A549 (cell line): ENCODE measurements at regions of chr15 and their contacts with region 1.

Region 1: DNA sequence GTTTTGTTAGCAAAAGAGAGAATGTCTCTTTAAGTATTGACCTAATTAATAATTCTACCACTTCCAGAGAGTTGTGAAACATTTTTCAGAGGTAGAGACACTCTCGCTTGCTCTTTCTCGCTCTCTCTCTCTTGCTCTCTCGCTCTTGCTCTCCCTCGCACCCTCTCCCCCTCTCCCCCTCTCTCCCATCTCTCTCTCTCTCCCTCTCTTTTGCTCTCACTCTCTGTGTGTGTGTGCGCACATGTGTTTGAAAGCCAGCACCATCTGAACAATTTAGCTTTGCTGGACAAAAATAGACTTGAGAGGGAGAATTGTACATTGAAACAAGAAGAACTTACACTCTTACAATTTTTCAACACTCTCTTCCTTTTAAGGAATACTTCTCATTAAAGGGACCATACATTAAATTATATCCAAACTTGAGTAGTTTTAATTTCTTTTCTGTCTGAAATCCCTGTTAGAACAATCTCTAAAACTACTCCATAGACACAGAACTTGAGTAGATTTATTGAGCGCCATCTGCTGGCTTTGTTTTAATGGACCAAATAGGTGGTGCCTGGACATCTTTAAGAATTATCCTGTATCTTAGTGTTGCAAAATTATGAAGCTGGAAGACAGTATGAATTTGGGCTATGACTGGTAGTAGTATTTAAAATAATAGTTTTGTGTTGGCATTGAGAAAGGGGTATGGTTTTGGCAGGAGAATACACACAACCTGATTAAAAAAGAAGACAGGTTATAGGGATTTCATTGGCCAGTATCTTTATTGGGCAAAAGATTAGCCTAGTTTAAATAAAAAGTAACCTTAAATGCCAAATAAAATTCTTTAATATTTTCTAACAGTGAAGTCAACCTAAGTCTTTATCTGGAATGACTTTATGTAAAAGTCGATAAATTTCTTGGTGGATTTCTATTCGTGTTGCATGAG is 124.6 kb downstream of the AKAP13 start:
- DNase-seq: peak; percentile 49 to 74
- ATAC-seq: peak; percentile 83 to 89; a peak in 4 of 6 replicates
- H3K4me3 ChIP-seq: no peak overlapping the region
- H3K27ac ChIP-seq: peak overlapping the region in 1 of 2 experiments; percentile 6; a peak in 1 of 6 replicates
- H3K4me1 ChIP-seq: peaks cover 15% of the 10 kb centered on the region; the same call in 2 of the 3 replicates
- CTCF ChIP-seq: peak; percentile 93
- EP300 ChIP-seq: no peak
- POLR2A ChIP-seq: no peak
- RAD21 ChIP-seq: peak; percentile 69 to 74

Region 2: DNA sequence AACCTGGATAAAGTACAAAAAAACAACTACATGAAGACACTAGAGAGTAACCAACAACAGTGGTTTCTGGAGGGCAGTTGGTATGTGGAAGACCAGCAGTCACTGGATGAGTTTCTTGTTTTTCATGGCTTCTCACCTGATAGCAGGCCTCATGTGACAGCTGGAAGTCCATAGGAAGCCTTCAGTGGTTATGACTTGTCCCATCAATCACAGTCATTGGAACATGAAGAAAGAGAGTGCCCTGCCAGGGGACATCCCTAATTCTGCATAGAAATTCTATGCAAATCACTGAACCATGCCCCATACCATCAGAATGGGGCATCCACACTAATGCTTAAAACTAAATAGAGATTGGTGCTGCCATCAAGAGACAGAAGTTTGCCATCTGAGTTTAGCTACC is 43.0 kb before region 1 on chr15:
- CTCF ChIA-PET with region 1: no interaction called
- POLR2A ChIA-PET with region 1: no interaction called
- DNase-seq: no peak
- ATAC-seq: no peak
- H3K4me3 ChIP-seq: no peak overlapping the region
- H3K27ac ChIP-seq: no peak overlapping the region
- H3K4me1 ChIP-seq: peaks cover 48% of the 10 kb centered on the region
- CTCF ChIP-seq: no peak
- EP300 ChIP-seq: no peak
- POLR2A ChIP-seq: no peak
- RAD21 ChIP-seq: no peak

Region 3: DNA sequence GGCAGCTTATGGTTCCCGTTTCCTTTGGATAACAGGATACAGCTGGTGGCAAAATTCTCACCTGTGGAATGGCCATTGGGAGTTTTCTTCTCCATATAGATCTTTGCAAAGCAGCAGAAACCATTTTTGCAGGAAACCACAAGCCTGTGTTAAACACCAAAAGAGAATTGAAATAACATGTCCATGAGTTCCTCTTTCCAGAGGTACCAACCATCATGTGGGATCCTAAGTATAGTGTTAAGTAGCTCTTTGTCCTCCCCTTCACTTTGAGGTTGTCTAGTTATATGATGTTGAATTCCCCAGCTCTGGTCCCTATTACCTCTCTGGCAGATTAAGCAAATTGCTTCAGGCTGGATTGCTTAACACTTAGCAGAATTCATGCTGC is 29.7 kb before region 1 on chr15:
- CTCF ChIA-PET with region 1: interaction called, 12 read pairs
- POLR2A ChIA-PET with region 1: no interaction called
- DNase-seq: no peak
- ATAC-seq: no peak
- H3K4me3 ChIP-seq: no peak overlapping the region
- H3K27ac ChIP-seq: no peak overlapping the region
- H3K4me1 ChIP-seq: peaks cover 67% of the 10 kb centered on the region
- CTCF ChIP-seq: no peak
- EP300 ChIP-seq: no peak
- POLR2A ChIP-seq: no peak
- RAD21 ChIP-seq: no peak

Region 4: GRCh38 chr15:85494048-85494793 is 10.8 kb before region 1 on chr15:
- CTCF ChIA-PET with region 1: interaction called, 56 read pairs
- POLR2A ChIA-PET with region 1: no interaction called
- DNase-seq: peak; percentile 91 to 92
- ATAC-seq: peak; percentile 96 to 97
- H3K4me3 ChIP-seq: no peak overlapping the region
- H3K27ac ChIP-seq: peak overlapping the region; percentile 47 to 81
- H3K4me1 ChIP-seq: peaks cover 57% of the 10 kb centered on the region
- CTCF ChIP-seq: no peak
- EP300 ChIP-seq: no peak
- POLR2A ChIP-seq: no peak
- RAD21 ChIP-seq: no peak

Region 5: DNA sequence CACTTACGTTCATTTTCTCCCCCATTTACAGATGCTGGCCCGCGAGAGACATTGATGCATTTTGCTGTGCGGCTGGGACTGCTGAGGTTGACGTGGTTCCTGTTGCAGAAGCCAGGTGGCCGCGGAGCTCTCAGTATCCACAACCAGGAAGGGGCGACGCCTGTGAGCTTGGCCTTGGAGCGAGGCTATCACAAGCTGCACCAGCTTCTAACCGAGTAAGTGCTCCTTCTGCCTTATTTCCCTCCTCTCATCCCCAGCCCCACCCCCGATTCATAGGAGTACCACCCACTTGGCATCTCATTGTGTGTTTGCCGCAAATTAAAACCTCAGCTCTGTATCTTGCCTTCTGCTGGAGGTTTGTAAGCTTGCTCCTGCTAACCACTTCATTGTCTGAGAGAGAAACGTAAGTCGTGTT is 38.7 kb after region 1 on chr15:
- CTCF ChIA-PET with region 1: interaction called, 14 read pairs
- POLR2A ChIA-PET with region 1: no interaction called
- DNase-seq: no peak
- ATAC-seq: 0 out of 6 replicates have a peak, but pooled peaks of 1 of the 2 experiments have one; percentile 20
- H3K4me3 ChIP-seq: no peak overlapping the region
- H3K27ac ChIP-seq: no peak overlapping the region; a peak in 1 of 6 replicates
- H3K4me1 ChIP-seq: peaks cover 32% of the 10 kb centered on the region
- CTCF ChIP-seq: no peak
- EP300 ChIP-seq: no peak
- POLR2A ChIP-seq: no peak
- RAD21 ChIP-seq: no peak